ENCODE measurements at regions of chr1 and their contacts with region 1.

Region 1: DNA sequence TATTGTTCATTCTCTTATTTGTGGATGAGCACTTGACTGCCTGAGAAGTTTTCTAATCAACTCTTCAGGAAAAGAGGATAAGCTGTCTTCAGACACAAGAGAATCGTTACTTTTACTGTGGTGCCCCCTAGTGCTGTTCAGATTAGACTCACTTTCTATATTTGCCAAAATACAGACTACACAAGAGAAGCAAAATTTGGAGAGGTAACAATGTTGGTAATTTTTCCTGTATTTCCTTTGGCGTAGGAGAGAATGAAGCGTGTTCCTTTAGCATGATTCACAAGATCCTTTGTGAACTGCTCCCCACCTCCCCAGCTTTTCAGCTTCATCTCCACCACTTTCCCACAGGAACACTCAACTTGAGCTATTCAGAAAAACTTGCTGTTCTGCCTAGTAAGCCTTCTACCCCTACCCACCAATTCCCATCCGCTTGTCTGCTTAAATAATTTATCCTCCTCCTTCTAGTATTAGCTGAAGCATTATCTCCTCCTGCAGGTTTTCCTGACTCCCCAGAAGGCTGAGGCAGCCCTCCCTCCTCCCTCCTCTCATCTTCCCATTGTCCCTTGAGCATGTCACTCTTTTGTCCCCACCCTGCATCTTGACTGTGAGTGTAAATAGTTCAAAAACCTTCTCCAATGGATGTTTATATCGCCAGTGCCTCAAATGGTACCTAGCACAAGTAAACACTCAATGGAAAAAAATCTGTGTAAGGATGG is 4.5 kb downstream of the TNFSF4 start:
- DNase-seq: no peak
- ATAC-seq: peak; percentile 54
- H3K4me3 ChIP-seq: no peak overlapping the region
- H3K27ac ChIP-seq: no peak overlapping the region
- H3K4me1 ChIP-seq: peaks cover 14% of the 10 kb centered on the region
- H3K27me3 ChIP-seq: no peaks in the 10 kb centered on the region
- CTCF ChIP-seq: peak; percentile 54 to 69 (median 62)
- EP300 ChIP-seq: no peak
- POLR2A ChIP-seq: no peak
- RAD21 ChIP-seq: peak; percentile 90

Region 2: GRCh38 chr1:172778456-172779455 is 423.8 kb before region 1 on chr1:
- CTCF ChIA-PET with region 1: interaction called, 38 read pairs
- POLR2A ChIA-PET with region 1: no interaction called
- RAD21 ChIA-PET with region 1: interaction called, 21 read pairs
- SMC1A ChIA-PET with region 1: interaction called, 22 read pairs
- in situ Hi-C with region 1: no loop called
- intact Hi-C with region 1: loop called (anchors 1 kb)
- DNase-seq: peak; percentile 23
- ATAC-seq: peak; percentile 86
- H3K4me3 ChIP-seq: no peak overlapping the region
- H3K27ac ChIP-seq: no peak overlapping the region
- H3K4me1 ChIP-seq: peaks cover 30% of the 10 kb centered on the region
- H3K27me3 ChIP-seq: peaks cover 0 to 8% of the 10 kb centered on the region in 2 experiments; a peak in 3 of 4 replicates
- CTCF ChIP-seq: peak; percentile 19 to 40 (median 28); a peak in 3 of 6 replicates
- EP300 ChIP-seq: no peak
- POLR2A ChIP-seq: no peak
- RAD21 ChIP-seq: peak; percentile 55

Region 3: GRCh38 chr1:173020138-173020750 is 182.3 kb before region 1 on chr1:
- CTCF ChIA-PET with region 1: interaction called, 11 read pairs
- POLR2A ChIA-PET with region 1: no interaction called
- RAD21 ChIA-PET with region 1: interaction called, 34 read pairs
- SMC1A ChIA-PET with region 1: interaction called, 10 read pairs
- in situ Hi-C with region 1: no loop called
- intact Hi-C with region 1: no loop called
- DNase-seq: peak; percentile 66
- ATAC-seq: peak; percentile 96
- H3K4me3 ChIP-seq: no peak overlapping the region
- H3K27ac ChIP-seq: peak overlapping the region; percentile 76
- H3K4me1 ChIP-seq: peaks cover 12% of the 10 kb centered on the region
- H3K27me3 ChIP-seq: no peaks in the 10 kb centered on the region
- CTCF ChIP-seq: no peak
- EP300 ChIP-seq: peak; percentile 47 to 62; a peak in 2 of 4 replicates
- POLR2A ChIP-seq: no peak
- RAD21 ChIP-seq: no peak

Region 4: GRCh38 chr1:173224280-173224892 is 21.8 kb after region 1 on chr1:
- CTCF ChIA-PET with region 1: interaction called, 104 read pairs
- POLR2A ChIA-PET with region 1: no interaction called
- RAD21 ChIA-PET with region 1: interaction called, 26 read pairs
- SMC1A ChIA-PET with region 1: interaction called, 189 read pairs
- in situ Hi-C with region 1: no loop called
- intact Hi-C with region 1: no loop called
- DNase-seq: no peak
- ATAC-seq: peak; percentile 13
- H3K4me3 ChIP-seq: no peak overlapping the region
- H3K27ac ChIP-seq: no peak overlapping the region
- H3K4me1 ChIP-seq: peaks cover 38% of the 10 kb centered on the region
- H3K27me3 ChIP-seq: no peaks in the 10 kb centered on the region
- CTCF ChIP-seq: no peak
- EP300 ChIP-seq: no peak
- POLR2A ChIP-seq: no peak
- RAD21 ChIP-seq: no peak

Region 5: DNA sequence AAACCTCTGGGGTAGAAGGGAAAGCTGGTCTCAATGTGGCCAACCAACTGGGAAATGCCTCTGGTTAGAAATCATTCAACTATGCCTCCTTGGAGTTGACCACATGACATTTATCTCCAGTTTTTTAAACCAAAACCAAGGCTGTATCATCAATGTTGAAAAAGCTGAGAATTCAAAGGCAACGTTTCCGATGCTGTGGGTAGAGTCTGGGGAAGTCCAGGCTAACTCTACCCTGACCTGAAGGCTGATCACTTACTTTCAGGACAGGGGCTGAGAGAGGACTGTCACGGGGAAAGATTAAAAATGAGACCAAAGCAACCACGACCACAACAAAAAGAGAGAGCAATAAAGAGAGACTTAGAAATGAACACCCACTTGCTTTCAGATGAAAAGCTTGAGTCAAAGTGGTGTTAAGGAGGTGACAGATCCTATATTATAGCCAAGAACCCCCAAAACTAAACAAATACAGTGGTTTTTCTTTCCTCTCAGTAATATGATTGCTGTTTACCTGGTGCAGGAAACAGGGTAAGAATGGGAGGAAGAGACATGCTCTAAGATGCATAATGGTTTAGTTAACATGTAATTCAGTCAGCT is 95.3 kb after region 1 on chr1:
- CTCF ChIA-PET with region 1: interaction called, 12 read pairs
- POLR2A ChIA-PET with region 1: interaction called, 3 read pairs
- RAD21 ChIA-PET with region 1: interaction called, 7 read pairs
- SMC1A ChIA-PET with region 1: interaction called, 50 read pairs
- in situ Hi-C with region 1: no loop called
- intact Hi-C with region 1: no loop called
- DNase-seq: peak; percentile 92
- ATAC-seq: peak; percentile 95
- H3K4me3 ChIP-seq: peak overlapping the region; percentile 1; the same call in 1 of the 2 replicates
- H3K27ac ChIP-seq: peak overlapping the region; percentile 46; the same call in 1 of the 2 replicates
- H3K4me1 ChIP-seq: peaks cover 29% of the 10 kb centered on the region
- H3K27me3 ChIP-seq: no peaks in the 10 kb centered on the region
- CTCF ChIP-seq: no peak
- EP300 ChIP-seq: peak; percentile 85 to 91
- POLR2A ChIP-seq: no peak
- RAD21 ChIP-seq: peak; percentile 25; the same call in 1 of the 2 replicates

Region 6: GRCh38 chr1:173824331-173825081 is 621.9 kb after region 1 on chr1 and contains the starts of genes CENPL and DARS2:
- CTCF ChIA-PET with region 1: interaction called, 4 read pairs
- POLR2A ChIA-PET with region 1: no interaction called
- RAD21 ChIA-PET with region 1: interaction called, 7 read pairs
- SMC1A ChIA-PET with region 1: interaction called, 3 read pairs
- in situ Hi-C with region 1: no loop called
- intact Hi-C with region 1: loop called (anchors 10 kb)
- DNase-seq: peak; percentile 94
- ATAC-seq: peak; percentile 87
- H3K4me3 ChIP-seq: peak within 1 kb of the TSS; percentile 92
- H3K27ac ChIP-seq: peak within 1 kb of the TSS; percentile 91
- H3K4me1 ChIP-seq: no peaks in the 10 kb centered on the region; the same call in 1 of the 2 replicates
- H3K27me3 ChIP-seq: no peaks in the 10 kb centered on the region
- CTCF ChIP-seq: no peak
- EP300 ChIP-seq: no peak; a peak in 1 of 4 replicates
- POLR2A ChIP-seq: peak; percentile 83
- RAD21 ChIP-seq: no peak
- polyA plus RNA-seq, gene CENPL: 14.9 to 26.7 TPM
- polyA plus RNA-seq, gene DARS2: 23.9 to 25.2 TPM